Activated CD8-positive, alpha-beta T cell treated with anti-CD3 and anti-CD28 coated beads, Interleukin-2, amount 10 ng/mL, durations not matched to agents 7 days and 5 days (primary cell): ENCODE measurements at regions of chr1 and their contacts with region 1.

Region 1: DNA sequence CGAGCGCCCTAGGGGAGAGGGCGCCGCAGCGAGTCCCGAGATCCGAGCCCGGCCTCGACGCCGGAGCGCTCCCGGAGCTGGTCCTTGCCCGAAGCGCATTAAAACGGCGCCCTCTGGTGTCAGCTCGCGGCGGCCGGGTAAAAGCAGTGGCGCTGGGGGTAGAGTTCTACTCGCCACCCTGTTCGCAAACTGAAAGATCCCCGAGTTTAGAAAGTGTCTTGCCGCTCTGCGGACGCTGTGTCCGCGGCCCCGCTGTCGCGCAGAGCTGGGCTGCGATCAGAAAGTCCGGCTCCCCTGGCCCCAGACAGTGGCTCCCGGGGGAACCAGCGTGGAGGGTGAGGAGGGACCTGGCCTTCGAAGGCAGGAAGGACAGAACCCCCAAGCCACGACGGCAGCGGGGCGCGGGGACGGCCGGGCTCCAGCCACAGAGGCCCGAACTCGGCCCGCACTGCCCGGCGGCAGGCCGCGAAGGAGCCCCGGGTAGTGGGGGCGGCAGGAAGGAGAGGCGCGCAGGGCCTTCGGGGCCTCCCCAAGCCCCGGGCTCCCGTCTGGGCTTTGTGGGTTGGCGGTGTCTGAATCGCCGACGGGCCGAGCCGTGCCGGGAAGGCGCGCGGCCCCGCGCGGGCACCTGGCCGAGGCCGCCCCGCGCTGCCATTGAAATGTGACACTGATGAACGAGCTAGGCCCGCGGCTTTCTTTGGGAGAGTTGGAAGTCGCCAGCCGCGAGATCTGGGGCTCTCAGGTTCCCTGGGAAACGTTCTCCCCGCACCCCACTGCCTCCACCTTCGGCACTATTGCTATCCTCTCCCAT is 39.1 kb upstream of the NFIA start:
- DNase-seq: peak; percentile 88
- ATAC-seq: peak; percentile 97
- H3K4me3 Mint-ChIP-seq: peak overlapping the region; percentile 72
- H3K27ac Mint-ChIP-seq: no peak overlapping the region
- H3K4me1 Mint-ChIP-seq: peaks cover 6% of the 10 kb centered on the region
- H3K27me3 Mint-ChIP-seq: peaks cover 38% of the 10 kb centered on the region

Region 2: GRCh38 chr1:60699325-60699724 is 343.9 kb before region 1 on chr1:
- CTCF ChIA-PET with region 1: no interaction called
- POLR2A ChIA-PET with region 1: no interaction called
- DNase-seq: no peak
- ATAC-seq: no peak
- H3K4me3 Mint-ChIP-seq: no peak overlapping the region
- H3K27ac Mint-ChIP-seq: no peak overlapping the region
- H3K4me1 Mint-ChIP-seq: no peaks in the 10 kb centered on the region
- H3K27me3 Mint-ChIP-seq: no peaks in the 10 kb centered on the region

Region 3: DNA sequence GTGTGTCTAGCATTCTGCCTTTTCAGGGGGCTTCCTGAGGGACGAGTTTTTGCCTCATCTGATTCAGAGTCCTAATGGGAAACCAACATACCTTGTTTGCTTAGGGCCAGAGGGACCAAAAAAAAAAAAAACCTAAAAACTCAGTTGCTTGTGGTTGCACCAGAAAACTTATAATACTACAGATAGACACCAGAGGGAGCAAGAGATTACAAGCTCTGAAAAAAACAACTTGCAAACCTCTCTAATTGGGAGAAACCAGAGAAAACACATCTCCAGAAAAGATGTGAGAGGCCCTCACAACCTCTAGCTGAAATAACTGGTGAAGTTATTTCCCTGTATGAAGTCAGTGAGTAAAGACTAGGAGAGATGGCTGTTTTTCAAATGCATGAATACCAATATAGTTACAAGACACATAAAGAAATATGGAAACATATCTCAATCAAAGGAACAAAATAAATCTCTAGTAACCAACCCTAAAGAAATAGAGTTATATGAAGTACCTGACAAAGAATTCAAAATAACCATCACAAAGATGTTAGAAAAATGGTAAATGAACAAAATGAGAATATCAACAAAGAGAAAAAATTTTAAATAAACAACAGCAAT is 194.5 kb before region 1 on chr1:
- CTCF ChIA-PET with region 1: interaction called, 19 read pairs
- POLR2A ChIA-PET with region 1: no interaction called
- DNase-seq: no peak
- ATAC-seq: no peak
- H3K4me3 Mint-ChIP-seq: no peak overlapping the region
- H3K27ac Mint-ChIP-seq: no peak overlapping the region
- H3K4me1 Mint-ChIP-seq: no peaks in the 10 kb centered on the region
- H3K27me3 Mint-ChIP-seq: peaks cover 4% of the 10 kb centered on the region

Region 4: GRCh38 chr1:61077676-61078541 is 34.7 kb after region 1 on chr1:
- CTCF ChIA-PET with region 1: interaction called, 28 read pairs
- POLR2A ChIA-PET with region 1: interaction called, 3 read pairs
- DNase-seq: peak; percentile 95
- ATAC-seq: peak; percentile 85
- H3K4me3 Mint-ChIP-seq: peak overlapping the region; percentile 89
- H3K27ac Mint-ChIP-seq: peak overlapping the region; percentile 95
- H3K4me1 Mint-ChIP-seq: peaks cover 41% of the 10 kb centered on the region
- H3K27me3 Mint-ChIP-seq: peaks cover 34% of the 10 kb centered on the region